Panc1 (cell line): ENCODE measurements at regions of chr22 and their contacts with region 1.

Region 1: DNA sequence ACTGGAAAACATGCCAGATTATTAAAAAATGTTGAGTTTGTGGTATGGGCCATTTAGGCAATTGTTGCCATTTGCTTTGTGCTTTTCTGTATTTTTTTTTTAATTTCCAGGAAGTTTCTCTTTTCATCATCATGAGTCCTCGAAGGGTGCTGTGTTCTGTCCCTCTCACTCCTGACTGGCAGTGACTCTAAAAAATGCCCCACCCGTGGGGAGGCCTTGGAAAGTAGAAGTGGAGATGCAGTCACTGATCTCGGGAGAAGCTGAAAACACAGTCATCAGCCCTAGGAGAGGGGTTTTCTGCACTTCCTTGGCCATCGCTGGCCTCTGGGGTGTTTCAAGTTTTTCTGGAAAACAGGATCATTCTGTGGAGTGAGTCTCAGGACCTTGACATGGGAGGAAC is 98.5 kb upstream of the GRK3 start:
- DNase-seq: no peak
- ATAC-seq: no peak
- H3K4me3 ChIP-seq: no peak overlapping the region
- H3K27ac ChIP-seq: no peak overlapping the region
- H3K4me1 ChIP-seq: no peaks in the 10 kb centered on the region
- H3K27me3 ChIP-seq: no peaks in the 10 kb centered on the region
- CTCF ChIP-seq: no peak

Region 2: DNA sequence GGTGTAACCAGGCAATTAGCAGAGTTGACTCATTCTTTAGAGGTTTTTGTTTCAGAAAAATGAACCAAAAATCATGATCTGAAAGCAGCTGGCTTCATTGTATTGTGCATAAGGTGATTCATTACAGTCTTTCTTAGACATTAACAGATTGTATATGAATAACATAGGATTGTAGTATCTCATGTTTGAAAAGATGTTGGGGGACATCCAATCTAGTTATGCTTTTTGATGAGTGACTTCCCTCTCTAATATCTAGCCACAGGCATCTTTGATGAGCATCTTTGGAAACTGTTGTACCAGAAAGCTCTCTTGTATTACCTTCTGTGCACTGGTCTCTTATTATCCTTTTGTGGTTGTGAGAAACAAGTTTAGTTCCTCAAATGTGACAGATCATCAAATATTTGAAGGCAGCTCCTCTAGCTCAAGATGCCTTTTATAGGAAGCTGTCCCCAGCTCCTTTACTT is 106.8 kb after region 1 on chr22:
- CTCF ChIA-PET with region 1: no interaction called
- POLR2A ChIA-PET with region 1: no interaction called
- in situ Hi-C with region 1: no loop called
- intact Hi-C with region 1: no loop called
- DNase-seq: no peak
- ATAC-seq: no peak
- H3K4me3 ChIP-seq: no peak overlapping the region
- H3K27ac ChIP-seq: no peak overlapping the region
- H3K4me1 ChIP-seq: peaks cover under 1% of the 10 kb centered on the region; the same call in 1 of the 2 replicates
- H3K27me3 ChIP-seq: no peaks in the 10 kb centered on the region
- CTCF ChIP-seq: no peak

Region 3: DNA sequence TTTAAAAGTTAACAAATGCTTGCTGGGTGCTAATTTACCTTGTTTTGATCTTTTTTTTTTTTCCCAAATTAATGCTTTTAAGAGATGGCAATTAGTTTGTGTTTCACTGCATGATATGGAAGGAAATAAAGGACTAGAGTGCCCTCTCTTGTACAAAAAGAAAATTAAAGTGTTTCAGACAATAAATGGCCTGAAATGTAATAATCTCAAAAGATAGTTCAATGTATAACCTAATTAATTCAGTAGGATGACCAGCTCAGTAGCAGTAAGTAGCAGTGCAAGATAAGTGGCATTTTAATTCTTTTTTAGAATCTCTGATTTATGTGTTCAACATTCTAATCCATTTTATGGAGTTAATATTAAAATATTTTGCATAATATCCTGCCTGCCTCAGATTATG is 236.1 kb after region 1 on chr22:
- CTCF ChIA-PET with region 1: no interaction called
- POLR2A ChIA-PET with region 1: no interaction called
- in situ Hi-C with region 1: no loop called
- intact Hi-C with region 1: loop called (anchors 5 kb)
- DNase-seq: no peak
- ATAC-seq: no peak
- H3K4me3 ChIP-seq: no peak overlapping the region
- H3K27ac ChIP-seq: no peak overlapping the region
- H3K4me1 ChIP-seq: no peaks in the 10 kb centered on the region
- H3K27me3 ChIP-seq: no peaks in the 10 kb centered on the region
- CTCF ChIP-seq: no peak; the same call in 1 of the 2 replicates

Region 4: GRCh38 chr22:25777870-25778269 is 311.9 kb after region 1 on chr22:
- CTCF ChIA-PET with region 1: interaction called, 6 read pairs
- POLR2A ChIA-PET with region 1: no interaction called
- in situ Hi-C with region 1: no loop called
- intact Hi-C with region 1: loop called (anchors 10 kb)
- DNase-seq: peak; percentile 18
- ATAC-seq: peak; percentile 78; the same call in 1 of the 2 replicates
- H3K4me3 ChIP-seq: no peak overlapping the region
- H3K27ac ChIP-seq: no peak overlapping the region
- H3K4me1 ChIP-seq: no peaks in the 10 kb centered on the region
- H3K27me3 ChIP-seq: no peaks in the 10 kb centered on the region
- CTCF ChIP-seq: peak; percentile 59